Cardiac septum (tissue), 1 donor: ENCODE measurements at regions of chr1 and their contacts with region 1.

Region 1: GRCh38 chr1:6205849-6206519 is at the start of gene RNF207:
- DNase-seq: peak; percentile 83
- total RNA-seq, gene RNF207: 91.0 TPM

Region 2: DNA sequence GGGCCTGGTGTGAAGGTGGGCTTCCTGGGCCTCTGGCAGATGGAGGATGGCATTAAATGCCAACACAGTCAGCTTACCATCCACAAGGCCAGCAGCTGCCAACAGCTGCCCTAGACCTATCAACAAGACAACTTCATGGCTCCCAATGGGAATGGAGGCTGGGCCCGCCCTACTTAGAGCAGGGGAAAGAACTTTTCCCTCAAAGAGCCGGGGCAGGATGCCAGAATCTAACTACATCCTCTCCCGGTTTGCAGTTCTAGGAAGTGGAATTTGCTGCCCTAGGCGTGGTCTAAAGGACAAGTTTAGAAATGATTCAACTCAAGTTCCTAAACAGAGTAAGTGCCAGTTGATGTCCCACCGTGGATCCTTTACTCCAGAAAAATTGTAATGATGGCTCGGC is 16.7 kb after region 1 on chr1:
- intact Hi-C with region 1: loop called (anchors 2 kb)
- DNase-seq: peak; percentile 86

Region 3: DNA sequence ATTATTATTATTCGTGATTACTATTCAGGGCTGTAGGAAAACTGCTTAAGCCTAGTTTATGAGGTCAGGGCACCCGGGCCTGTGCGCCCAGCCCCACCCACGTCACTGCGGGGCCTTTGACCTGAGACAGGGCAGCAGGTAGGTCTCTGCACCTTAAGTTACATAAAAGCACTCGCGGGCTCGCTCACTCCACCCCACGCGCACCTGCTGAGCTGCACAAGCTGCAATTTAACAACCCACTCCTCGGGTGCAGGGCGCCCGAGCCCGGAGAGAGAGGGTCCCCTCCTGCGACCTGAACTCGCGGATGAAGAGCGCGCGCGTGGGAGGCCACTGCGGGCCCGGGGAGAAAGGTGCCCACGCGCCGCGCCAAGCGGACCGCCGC is 29.3 kb after region 1 on chr1:
- intact Hi-C with region 1: loop called (anchors 1 kb)
- DNase-seq: no peak

Region 4: GRCh38 chr1:6300342-6301048 is 94.5 kb after region 1 on chr1:
- intact Hi-C with region 1: no loop called
- DNase-seq: no peak